ENCODE measurements at regions of chr3 and their contacts with region 1.

Region 1: GRCh38 chr3:101518421-101518871 is 5.4 kb upstream of the SENP7 start:
- DNase-seq: no peak
- H3K4me3 ChIP-seq: no peak overlapping the region
- H3K27ac ChIP-seq: no peak overlapping the region
- H3K4me1 ChIP-seq: no peaks in the 10 kb centered on the region
- H3K27me3 ChIP-seq: no peaks in the 10 kb centered on the region
- CTCF ChIP-seq: no peak

Region 2: GRCh38 chr3:101567528-101568317 is 49.3 kb after region 1 on chr3:
- intact Hi-C with region 1: loop called (anchors 5 kb)
- DNase-seq: no peak
- H3K4me3 ChIP-seq: no peak overlapping the region
- H3K27ac ChIP-seq: no peak overlapping the region
- H3K4me1 ChIP-seq: no peaks in the 10 kb centered on the region
- H3K27me3 ChIP-seq: no peaks in the 10 kb centered on the region
- CTCF ChIP-seq: no peak

Region 3: GRCh38 chr3:101625879-101626278 is 107.4 kb after region 1 on chr3:
- intact Hi-C with region 1: no loop called
- DNase-seq: no peak
- H3K4me3 ChIP-seq: no peak overlapping the region
- H3K27ac ChIP-seq: no peak overlapping the region
- H3K4me1 ChIP-seq: no peaks in the 10 kb centered on the region
- H3K27me3 ChIP-seq: no peaks in the 10 kb centered on the region
- CTCF ChIP-seq: no peak